Esophagus squamous epithelium (tissue), 5 donors: ENCODE measurements at regions of chr5 and their contacts with region 1.

Region 1: DNA sequence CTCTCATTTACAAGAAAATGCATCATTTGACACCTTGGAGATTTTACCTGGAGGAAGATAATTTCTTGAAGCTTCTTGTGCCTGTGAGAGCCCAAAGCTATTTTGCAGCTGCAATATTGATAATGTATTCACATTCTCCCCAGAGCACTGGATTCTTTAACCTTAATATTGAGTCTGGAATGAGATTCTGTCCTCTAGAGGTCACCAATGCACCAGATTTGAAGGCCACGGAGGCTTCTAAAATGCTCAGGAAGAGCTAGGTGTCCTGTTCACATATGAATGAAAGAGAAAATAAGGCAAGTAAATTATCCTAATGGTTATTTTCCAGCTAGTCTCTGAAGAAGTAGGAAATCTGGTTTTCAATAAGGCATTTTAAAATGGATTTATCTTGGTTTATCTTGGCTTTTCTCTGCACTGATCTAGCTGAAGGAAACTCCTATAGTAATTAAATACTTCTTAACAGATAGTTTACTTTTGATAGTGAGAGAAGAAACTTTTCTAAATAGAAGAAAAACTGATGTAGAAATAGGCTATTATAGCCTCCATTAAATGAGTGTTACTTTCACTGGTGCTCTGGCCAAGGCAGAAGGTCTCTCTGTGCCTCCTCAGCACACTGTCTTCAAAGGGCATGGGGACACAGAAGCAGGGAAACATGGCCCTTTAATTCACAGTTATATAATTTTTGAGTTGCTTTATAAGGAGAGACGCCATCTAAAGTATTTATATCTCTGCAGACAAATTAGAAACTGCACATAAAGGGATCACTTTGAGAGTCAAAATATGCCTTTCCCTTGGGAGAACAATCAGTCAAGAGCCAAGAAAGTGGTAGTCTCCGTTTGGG is 297.0 kb upstream of the ACTBL2 start:
- DNase-seq: no peak
- H3K4me3 ChIP-seq: no peak overlapping the region
- H3K27ac ChIP-seq: peak overlapping the region in 2 of 4 donors; percentile 10 to 47
- H3K4me1 ChIP-seq: peaks cover 0 to 30% (median 2%) of the 10 kb centered on the region in 3 donors
- H3K27me3 ChIP-seq: no peaks in the 10 kb centered on the region
- CTCF ChIP-seq: peak in 5 of 6 experiments; percentile 41 to 72 (median 55)
- POLR2A ChIP-seq: no peak

Region 2: DNA sequence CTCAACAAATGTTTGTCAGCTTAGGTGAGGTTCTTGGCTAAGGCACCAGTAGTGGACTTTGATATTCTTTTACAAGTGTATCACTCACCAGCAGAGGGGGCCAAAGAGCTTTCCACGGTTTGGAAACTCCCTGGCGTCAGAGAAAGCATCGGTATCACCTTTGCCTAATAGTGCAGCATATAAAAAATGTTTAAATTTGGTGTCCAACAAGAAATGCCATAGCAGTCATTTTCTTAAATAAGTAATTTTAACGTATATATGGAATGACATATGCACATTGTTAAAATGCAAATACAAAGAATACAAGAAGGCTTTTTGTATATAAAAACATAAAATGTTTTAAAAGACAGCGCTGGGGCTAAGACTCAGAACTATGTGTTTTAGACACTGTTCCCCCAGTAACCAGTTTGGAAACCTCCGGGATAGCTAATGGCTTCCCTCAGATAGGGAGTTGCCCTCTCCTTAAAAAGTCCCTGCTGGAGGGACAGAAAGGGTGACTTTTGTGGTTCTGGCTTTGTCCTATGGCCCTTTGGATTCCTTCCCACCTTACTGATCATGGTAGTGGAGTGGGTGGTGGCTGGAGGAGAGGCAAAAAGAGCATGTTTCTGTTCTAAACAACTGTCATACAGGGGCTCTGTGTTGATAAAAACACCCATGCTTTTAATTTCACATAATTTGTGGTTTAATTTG is 481.2 kb before region 1 on chr5:
- intact Hi-C with region 1: loop called (anchors 10 kb)
- DNase-seq: no peak
- H3K4me3 ChIP-seq: peak overlapping the region in 1 of 4 donors; percentile 42
- H3K27ac ChIP-seq: peak overlapping the region in 1 of 4 donors; percentile 60
- H3K4me1 ChIP-seq: peaks cover 5 to 11% (median 7%) of the 10 kb centered on the region in 3 donors
- H3K27me3 ChIP-seq: no peaks in the 10 kb centered on the region
- CTCF ChIP-seq: peak; percentile 62 to 82 (median 78)
- POLR2A ChIP-seq: no peak

Region 3: DNA sequence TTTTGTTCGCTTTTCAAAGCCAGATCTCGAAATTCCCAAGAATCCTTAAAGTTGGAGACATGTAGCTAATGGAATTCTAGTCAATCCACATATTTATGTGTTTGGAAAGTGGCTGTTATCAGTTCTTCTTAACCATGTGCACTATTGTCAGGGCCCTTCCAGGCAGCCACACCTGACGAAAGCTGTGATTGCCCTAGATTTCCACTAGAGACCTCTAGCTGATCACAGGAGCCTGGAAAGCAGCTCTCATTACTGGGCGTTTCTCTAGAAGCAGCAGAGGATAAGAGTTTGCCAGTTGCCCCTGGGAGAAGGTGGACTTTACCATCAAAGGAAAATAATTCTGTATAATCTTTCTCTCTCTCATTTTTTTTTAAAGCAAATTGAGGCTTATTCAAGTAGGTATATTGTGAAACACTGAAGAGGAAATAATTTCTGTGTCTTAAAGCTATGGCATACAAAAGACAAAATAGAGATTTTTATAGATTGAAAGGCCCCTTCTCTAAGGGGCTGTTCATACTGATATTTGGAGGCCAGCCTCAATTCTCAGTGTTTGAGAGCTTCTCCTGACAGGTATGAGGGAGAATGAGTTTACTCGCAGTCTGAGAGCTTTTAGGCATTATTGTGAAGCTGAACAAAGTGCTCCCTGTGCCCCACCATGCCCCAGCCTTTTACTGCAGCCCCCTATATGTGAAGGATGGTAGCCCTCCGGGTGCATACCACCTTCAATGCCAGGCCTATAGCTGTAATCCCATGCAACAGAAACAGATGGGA is 108.4 kb after region 1 on chr5:
- intact Hi-C with region 1: loop called (anchors 5 kb)
- DNase-seq: no peak
- H3K4me3 ChIP-seq: no peak overlapping the region
- H3K27ac ChIP-seq: no peak overlapping the region
- H3K4me1 ChIP-seq: peaks cover 0 to 19% (median 9%) of the 10 kb centered on the region in 3 donors
- H3K27me3 ChIP-seq: no peaks in the 10 kb centered on the region
- CTCF ChIP-seq: peak in 5 of 6 experiments; percentile 38 to 84 (median 64)
- POLR2A ChIP-seq: no peak